Activated CD4-positive, alpha-beta memory T cell treated with anti-CD3 and anti-CD28 coated beads for 36 hours (primary cell): ENCODE measurements at regions of chr4 and their contacts with region 1.

Region 1: GRCh38 chr4:80072744-80073472 is at the start of gene ANTXR2:
- DNase-seq: peak; percentile 79
- H3K4me3 Mint-ChIP-seq: peak within 1 kb of the TSS; percentile 88
- H3K27ac Mint-ChIP-seq: peak within 1 kb of the TSS; percentile 81
- H3K4me1 Mint-ChIP-seq: peaks cover 72% of the 10 kb centered on the region
- H3K27me3 Mint-ChIP-seq: no peaks in the 10 kb centered on the region
- total RNA-seq, gene ANTXR2: 12.6 to 14.4 TPM

Region 2: DNA sequence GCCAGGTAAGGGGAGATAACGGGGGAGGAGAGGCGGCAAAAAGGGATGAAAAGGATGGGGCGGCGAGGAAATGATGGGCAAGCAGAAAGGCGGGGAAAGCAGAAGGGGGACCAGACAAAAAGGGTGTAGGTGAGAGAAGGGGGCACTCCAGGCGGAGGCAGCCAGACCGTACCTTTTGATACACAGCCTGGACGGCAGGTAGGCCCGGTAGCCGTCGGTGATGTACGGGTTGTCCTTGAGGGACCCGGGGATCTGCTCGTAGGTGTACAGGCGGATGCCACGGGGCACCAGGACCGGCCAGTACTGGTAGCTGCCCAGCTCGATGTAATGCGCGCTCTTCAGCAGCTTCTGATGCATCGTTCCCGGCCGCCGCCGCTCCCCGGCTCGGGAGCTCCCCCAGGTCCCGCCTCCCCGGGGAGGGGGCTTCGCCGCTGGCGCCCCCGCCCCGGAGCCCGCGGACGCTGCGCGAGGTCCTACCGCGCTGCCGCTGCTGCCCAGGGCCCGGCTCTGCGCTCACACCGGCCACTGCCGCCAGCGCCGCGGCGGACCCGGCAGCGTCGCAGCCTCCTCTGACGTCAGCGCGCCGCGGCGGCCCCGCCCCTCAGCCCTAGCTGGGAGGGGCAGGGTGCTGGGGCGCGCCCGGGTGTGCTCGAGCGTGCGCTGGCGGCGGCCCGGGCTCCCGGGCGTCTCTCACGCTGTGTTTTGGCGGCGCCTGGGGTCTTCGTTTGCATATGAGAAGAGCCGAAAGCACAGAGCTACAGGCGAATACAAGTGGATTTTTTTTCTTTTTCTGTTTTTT is 1133.8 kb before region 1 on chr4 and contains the start of gene PAQR3:
- CTCF ChIA-PET with region 1: no interaction called
- POLR2A ChIA-PET with region 1: no interaction called
- intact Hi-C with region 1: loop called (anchors 5 kb)
- DNase-seq: peak; percentile 85
- H3K4me3 Mint-ChIP-seq: peak within 1 kb of the TSS; percentile 95
- H3K27ac Mint-ChIP-seq: no peak within 1 kb of the TSS
- H3K4me1 Mint-ChIP-seq: peaks cover 36% of the 10 kb centered on the region
- H3K27me3 Mint-ChIP-seq: peaks cover 12% of the 10 kb centered on the region
- total RNA-seq, gene PAQR3: 6.9 to 10.2 TPM

Region 3: GRCh38 chr4:79923281-79923680 is 149.6 kb before region 1 on chr4:
- CTCF ChIA-PET with region 1: no interaction called
- POLR2A ChIA-PET with region 1: no interaction called
- intact Hi-C with region 1: loop called (anchors 2 kb)
- DNase-seq: no peak
- H3K4me3 Mint-ChIP-seq: no peak overlapping the region
- H3K27ac Mint-ChIP-seq: no peak overlapping the region
- H3K4me1 Mint-ChIP-seq: peaks cover 11% of the 10 kb centered on the region
- H3K27me3 Mint-ChIP-seq: no peaks in the 10 kb centered on the region

Region 4: GRCh38 chr4:80058740-80059139 is 14.2 kb before region 1 on chr4:
- CTCF ChIA-PET with region 1: interaction called, 3 read pairs
- POLR2A ChIA-PET with region 1: interaction called, 7 read pairs
- intact Hi-C with region 1: loop called (anchors 1 kb)
- DNase-seq: peak; percentile 66
- H3K4me3 Mint-ChIP-seq: peak overlapping the region; percentile 72
- H3K27ac Mint-ChIP-seq: peak overlapping the region; percentile 91
- H3K4me1 Mint-ChIP-seq: peaks cover 70% of the 10 kb centered on the region
- H3K27me3 Mint-ChIP-seq: no peaks in the 10 kb centered on the region

Region 5: DNA sequence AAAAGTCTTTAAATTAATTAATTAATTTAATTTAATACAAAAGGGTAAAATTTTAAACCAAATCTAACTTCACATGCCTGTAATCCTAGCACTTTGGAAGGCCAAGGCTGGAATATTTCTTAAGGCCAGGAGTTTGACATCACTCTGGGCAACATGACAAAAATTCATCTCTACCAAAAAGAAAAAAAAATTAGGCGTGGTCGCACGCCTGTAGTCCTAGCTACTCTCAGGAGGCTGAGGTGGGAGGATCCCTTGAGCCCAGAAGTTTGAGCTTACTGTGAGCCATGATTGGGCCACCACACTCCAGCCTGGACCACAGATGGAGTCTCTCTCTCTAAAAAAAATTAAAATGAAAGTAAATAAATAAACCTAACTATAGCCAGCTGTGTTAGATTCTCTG is 39.3 kb after region 1 on chr4:
- CTCF ChIA-PET with region 1: no interaction called
- POLR2A ChIA-PET with region 1: no interaction called
- intact Hi-C with region 1: no loop called
- DNase-seq: no peak
- H3K4me3 Mint-ChIP-seq: no peak overlapping the region
- H3K27ac Mint-ChIP-seq: no peak overlapping the region
- H3K4me1 Mint-ChIP-seq: no peaks in the 10 kb centered on the region
- H3K27me3 Mint-ChIP-seq: no peaks in the 10 kb centered on the region

Region 6: GRCh38 chr4:80153874-80154544 is 81.1 kb after region 1 on chr4:
- CTCF ChIA-PET with region 1: interaction called, 5 read pairs
- POLR2A ChIA-PET with region 1: no interaction called
- intact Hi-C with region 1: loop called (anchors 1 kb)
- DNase-seq: no peak
- H3K4me3 Mint-ChIP-seq: peak overlapping the region; percentile 6
- H3K27ac Mint-ChIP-seq: peak overlapping the region; percentile 52
- H3K4me1 Mint-ChIP-seq: peaks cover 20% of the 10 kb centered on the region
- H3K27me3 Mint-ChIP-seq: no peaks in the 10 kb centered on the region

Region 7: DNA sequence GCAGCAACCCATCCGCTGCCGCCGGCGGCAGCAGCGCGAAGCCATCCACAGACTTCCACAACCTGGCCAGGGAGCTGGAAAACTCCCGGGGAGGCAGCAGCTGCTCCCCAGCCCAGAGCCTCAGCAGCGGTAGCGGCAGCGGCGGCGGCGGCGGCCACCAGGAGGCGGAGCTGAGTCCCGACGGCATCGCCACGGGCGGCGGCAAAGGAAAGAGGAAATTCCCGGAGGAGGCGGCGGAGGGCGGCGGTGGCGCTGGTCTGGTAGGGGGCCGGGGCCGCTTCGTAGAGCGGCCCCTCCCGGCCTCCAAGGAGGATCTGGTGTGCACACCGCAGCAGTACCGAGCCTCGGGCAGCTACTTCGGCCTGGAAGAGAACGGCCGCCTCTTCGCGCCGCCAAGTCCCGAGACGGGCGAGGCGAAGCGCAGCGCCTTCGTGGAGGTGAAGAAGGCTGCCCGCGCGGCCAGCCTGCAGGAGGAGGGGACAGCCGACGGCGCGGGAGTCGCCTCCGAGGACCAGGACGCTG is 129.3 kb after region 1 on chr4:
- CTCF ChIA-PET with region 1: interaction called, 13 read pairs
- POLR2A ChIA-PET with region 1: interaction called, 5 read pairs
- intact Hi-C with region 1: loop called (anchors 2 kb)
- DNase-seq: peak; percentile 86
- H3K4me3 Mint-ChIP-seq: peak overlapping the region; percentile 73
- H3K27ac Mint-ChIP-seq: peak overlapping the region; percentile 78
- H3K4me1 Mint-ChIP-seq: peaks cover 22% of the 10 kb centered on the region
- H3K27me3 Mint-ChIP-seq: peaks cover 6% of the 10 kb centered on the region